Activated CD4-positive, alpha-beta T cell treated with anti-CD3 and anti-CD28 coated beads, Interleukin-2, amount 10 ng/mL, durations not matched to agents 24 days and 14 days (primary cell): ENCODE measurements at regions of chr1 and their contacts with region 1.

Region 1: GRCh38 chr1:155227261-155228095 is 19.0 kb downstream of the MTX1 start:
- DNase-seq: peak; percentile 99
- H3K4me3 Mint-ChIP-seq: peak overlapping the region; percentile 88
- H3K27ac Mint-ChIP-seq: peak overlapping the region; percentile 88
- H3K4me1 Mint-ChIP-seq: peaks cover 26% of the 10 kb centered on the region
- H3K27me3 Mint-ChIP-seq: no peaks in the 10 kb centered on the region

Region 2: DNA sequence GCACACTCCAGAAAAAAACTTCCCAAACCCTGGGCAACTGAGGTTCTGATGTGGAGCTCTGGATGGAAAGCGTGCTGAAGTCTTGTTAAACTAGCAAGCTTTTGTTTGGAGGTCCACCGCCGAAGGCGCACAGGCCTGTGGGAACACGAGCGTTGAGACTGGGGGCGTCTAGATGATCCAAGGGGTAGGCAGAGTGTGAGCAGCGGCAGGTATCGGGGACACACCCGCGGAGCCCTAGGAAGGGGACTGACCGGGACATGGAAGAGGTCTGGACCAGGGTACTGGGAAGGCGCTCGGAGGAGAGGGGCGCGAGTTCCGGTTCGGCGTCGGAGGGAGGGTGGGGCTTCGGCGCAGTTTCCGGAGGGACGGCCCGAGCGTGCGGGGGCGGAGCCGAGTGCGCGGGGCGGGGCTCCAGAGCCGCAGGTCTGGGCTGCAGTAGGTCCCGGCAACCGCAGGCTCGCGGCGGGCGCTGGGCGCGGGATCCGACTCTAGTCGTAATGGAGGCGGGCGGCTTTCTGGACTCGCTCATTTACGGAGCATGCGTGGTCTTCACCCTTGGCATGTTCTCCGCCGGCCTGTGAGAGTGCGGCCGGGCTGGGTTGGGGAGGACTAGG is 92.0 kb before region 1 on chr1 and contains the start of gene SLC50A1:
- intact Hi-C with region 1: no loop called
- DNase-seq: peak; percentile 98
- H3K4me3 Mint-ChIP-seq: peak within 1 kb of the TSS; percentile 98
- H3K27ac Mint-ChIP-seq: peak within 1 kb of the TSS; percentile 98
- H3K4me1 Mint-ChIP-seq: peaks cover 44% of the 10 kb centered on the region
- H3K27me3 Mint-ChIP-seq: peaks cover 7% of the 10 kb centered on the region
- total RNA-seq, gene SLC50A1: 46.2 and 46.3 TPM in 2 replicates

Region 3: DNA sequence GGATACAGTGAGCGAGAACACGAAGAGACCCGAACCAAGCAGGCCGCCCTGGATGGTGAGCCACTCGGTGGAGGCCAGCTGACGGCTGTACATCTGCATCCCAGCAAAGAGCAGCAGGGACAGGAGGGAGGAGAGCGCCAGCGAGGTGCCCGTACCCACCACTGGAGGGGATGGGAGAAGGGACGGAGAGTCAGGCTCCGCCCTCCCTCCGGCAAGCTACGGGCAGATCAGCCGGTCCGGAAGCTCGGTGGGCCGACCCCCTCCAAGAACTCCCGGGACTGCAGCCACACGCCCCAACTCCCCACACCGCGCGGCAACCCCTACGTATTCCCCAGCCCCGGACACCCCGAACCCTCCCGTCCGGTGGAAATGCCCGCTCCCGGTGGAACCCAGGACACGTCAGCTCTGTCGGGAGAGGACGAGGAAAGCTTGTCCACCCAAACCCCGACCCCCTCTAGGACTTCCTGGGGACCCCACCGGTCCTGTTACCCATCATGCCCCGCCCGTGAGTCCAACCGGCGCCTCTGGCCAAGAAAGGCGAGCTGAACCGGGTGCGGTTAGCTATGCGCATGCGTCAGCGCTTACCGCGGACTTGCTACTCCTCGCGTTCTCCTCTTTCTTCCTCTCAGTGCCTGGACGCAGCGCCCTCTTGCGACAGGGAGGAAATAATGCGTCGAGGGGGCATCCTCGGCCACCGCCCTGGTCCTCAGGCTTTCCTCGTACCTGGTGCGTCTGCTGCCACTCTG is 54.6 kb before region 1 on chr1 and contains the start of gene KRTCAP2:
- intact Hi-C with region 1: loop called (anchors 1 kb)
- DNase-seq: peak; percentile 98
- H3K4me3 Mint-ChIP-seq: peak within 1 kb of the TSS; percentile 99
- H3K27ac Mint-ChIP-seq: peak within 1 kb of the TSS; percentile 99
- H3K4me1 Mint-ChIP-seq: peaks cover 51% of the 10 kb centered on the region
- H3K27me3 Mint-ChIP-seq: peaks cover 6% of the 10 kb centered on the region
- total RNA-seq, gene KRTCAP2: 244 and 245 TPM in 2 replicates

Region 4: DNA sequence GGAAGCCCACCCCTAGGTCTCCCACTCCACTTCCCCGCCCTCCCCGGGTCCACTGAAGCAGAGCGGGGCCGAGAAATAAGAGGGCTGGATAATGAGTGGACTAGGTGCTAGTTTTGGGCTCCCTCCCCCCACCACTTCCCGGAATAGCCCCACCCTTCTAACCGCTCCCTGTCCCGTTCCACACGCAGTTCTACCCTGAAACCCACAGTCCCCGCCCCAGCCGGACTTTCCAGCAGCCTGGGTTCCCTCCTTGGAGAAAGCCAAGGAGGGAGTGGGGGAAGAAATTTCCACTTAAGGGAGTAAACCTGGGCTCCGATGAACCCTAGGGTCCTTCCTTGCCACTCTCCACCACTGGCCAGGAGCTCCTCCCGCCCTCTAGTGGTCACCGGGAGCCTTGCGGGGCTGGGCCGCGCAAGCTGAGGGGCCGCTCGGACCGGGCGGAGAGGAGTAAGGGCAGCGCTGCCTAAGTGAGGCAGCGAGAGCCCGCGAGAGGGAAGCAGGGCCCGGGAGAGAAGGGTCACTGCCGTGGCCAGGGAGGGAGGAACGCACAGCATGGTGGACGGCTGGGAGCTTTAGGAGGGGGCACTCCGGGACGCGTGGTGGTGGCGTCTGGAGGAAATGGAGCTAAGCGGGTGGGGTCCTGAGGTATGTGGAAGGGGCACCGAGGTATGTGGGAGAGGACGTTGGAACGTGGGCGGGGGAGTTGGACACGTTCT is 34.0 kb before region 1 on chr1:
- intact Hi-C with region 1: loop called (anchors 1 kb)
- DNase-seq: peak; percentile 94
- H3K4me3 Mint-ChIP-seq: peak overlapping the region; percentile 97
- H3K27ac Mint-ChIP-seq: peak overlapping the region; percentile 100
- H3K4me1 Mint-ChIP-seq: peaks cover 34% of the 10 kb centered on the region
- H3K27me3 Mint-ChIP-seq: no peaks in the 10 kb centered on the region

Region 5: GRCh38 chr1:155244368-155245162 is 17.1 kb after region 1 on chr1:
- intact Hi-C with region 1: loop called (anchors 1 kb)
- DNase-seq: peak; percentile 99
- H3K4me3 Mint-ChIP-seq: peak overlapping the region; percentile 81
- H3K27ac Mint-ChIP-seq: peak overlapping the region; percentile 96
- H3K4me1 Mint-ChIP-seq: peaks cover 49% of the 10 kb centered on the region
- H3K27me3 Mint-ChIP-seq: peaks cover 3% of the 10 kb centered on the region

Region 6: DNA sequence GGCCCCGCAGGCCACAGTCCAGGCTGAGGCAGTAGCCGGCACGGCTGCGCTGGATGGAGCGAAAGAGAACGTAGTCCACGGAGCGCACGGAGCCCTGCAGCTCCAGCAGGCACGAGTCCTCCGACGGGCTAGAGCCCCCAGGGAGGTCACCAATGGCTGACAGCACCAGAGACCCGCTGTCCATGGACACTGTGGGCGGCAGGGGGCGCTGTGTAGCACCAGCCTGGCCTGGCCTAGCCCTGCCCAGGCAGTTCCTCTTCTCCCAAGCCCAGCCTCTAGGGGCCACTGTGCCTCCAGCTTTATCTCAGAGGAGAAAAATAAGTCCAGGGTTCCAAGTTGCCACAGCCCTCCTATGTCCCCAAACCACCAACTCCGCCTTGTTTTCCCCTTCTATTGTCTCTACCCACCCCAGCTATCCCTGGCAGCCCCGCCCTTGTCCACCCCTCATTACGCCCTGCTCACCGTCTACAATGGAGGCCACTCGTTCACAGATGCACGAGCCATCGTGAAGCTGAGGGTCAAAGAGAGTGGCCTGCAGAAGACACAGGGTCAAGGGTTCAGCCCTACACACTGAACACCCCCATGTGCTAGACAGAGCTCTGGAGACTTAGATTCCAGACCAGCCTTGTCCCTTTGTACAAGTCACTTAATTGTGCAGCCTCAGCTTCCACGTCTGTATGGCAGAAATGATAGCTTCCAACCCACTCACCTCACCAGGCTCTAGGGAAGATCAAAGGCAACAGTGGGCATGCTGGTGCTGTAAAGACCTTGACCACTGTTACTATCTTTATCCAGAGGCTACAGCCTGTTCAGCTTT is 23.4 kb after region 1 on chr1:
- intact Hi-C with region 1: loop called (anchors 1 kb)
- DNase-seq: peak; percentile 99
- H3K4me3 Mint-ChIP-seq: peak overlapping the region; percentile 58
- H3K27ac Mint-ChIP-seq: no peak overlapping the region
- H3K4me1 Mint-ChIP-seq: peaks cover 32% of the 10 kb centered on the region
- H3K27me3 Mint-ChIP-seq: no peaks in the 10 kb centered on the region